Posterior vena cava (tissue), 2 donors: ENCODE measurements at regions of chr2 and their contacts with region 1.

Region 1: DNA sequence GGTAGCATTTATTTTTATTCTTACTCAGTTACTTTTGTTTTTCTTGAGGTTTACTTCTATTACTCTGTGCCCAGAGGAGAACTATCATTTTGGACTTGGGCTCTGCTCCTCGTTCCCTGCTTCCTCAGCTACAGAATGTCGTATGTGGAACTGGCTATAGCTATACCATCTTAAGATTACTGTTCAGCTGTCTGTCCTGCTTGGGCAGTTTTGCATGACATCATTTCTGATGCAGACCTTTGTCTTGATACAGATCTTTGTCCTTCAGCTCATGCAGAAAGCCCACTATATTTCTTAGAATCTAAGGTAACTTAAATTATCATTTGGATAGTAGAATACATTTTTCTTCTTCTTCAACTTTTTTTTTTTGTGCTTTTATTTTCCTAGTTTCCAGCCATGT is 13.8 kb upstream of the C1GALT1C1L start:
- DNase-seq: no peak

Region 2: DNA sequence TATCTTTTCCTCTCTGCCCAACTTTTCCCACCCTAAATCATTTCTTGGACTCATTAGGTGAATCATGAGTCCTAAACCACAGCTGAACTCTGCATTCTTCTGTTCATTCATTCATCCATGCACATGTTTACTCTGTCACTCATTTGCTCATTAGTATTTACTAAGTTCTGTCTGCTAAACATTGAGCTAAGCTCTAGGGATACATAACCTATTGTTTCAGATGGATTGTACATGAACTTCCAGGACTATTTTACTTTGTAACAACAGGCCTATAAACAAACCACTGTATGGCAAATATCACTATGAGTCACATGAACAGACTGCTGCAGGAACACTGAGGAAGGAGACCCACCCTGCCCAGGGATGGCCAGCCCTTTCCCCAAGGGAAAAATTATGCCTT is 69.2 kb after region 1 on chr2:
- intact Hi-C with region 1: loop called in 1 of 2 experiments (anchors 2 kb)
- DNase-seq: no peak